AG04449 (cell line): ENCODE measurements at regions of chr1 and their contacts with region 1.

Region 1: GRCh38 chr1:160675641-160676410 is 29.0 kb upstream of the SLAMF1 start:
- DNase-seq: peak; percentile 21
- H3K4me3 ChIP-seq: no peak overlapping the region
- CTCF ChIP-seq: peak; percentile 82

Region 2: GRCh38 chr1:160951443-160952128 is 275.8 kb after region 1 on chr1:
- CTCF ChIA-PET with region 1: interaction called, 17 read pairs
- POLR2A ChIA-PET with region 1: no interaction called
- DNase-seq: no peak
- H3K4me3 ChIP-seq: no peak overlapping the region
- CTCF ChIP-seq: peak; percentile 66

Region 3: GRCh38 chr1:161001525-161001924 is 325.7 kb after region 1 on chr1:
- CTCF ChIA-PET with region 1: no interaction called
- POLR2A ChIA-PET with region 1: no interaction called
- DNase-seq: no peak
- H3K4me3 ChIP-seq: no peak overlapping the region
- CTCF ChIP-seq: no peak